Dorsolateral prefrontal cortex (tissue), 120 donors: ENCODE measurements at regions of chr12 and their contacts with region 1.

Region 1: GRCh38 chr12:38332814-38333213 is 16.2 kb downstream of the ALG10B start:
- DNase-seq: no peak
- H3K4me3 ChIP-seq: no peak overlapping the region
- H3K27ac ChIP-seq: no peak overlapping the region
- H3K27me3 ChIP-seq: no peaks in the 10 kb centered on the region
- CTCF ChIP-seq: no peak

Region 2: DNA sequence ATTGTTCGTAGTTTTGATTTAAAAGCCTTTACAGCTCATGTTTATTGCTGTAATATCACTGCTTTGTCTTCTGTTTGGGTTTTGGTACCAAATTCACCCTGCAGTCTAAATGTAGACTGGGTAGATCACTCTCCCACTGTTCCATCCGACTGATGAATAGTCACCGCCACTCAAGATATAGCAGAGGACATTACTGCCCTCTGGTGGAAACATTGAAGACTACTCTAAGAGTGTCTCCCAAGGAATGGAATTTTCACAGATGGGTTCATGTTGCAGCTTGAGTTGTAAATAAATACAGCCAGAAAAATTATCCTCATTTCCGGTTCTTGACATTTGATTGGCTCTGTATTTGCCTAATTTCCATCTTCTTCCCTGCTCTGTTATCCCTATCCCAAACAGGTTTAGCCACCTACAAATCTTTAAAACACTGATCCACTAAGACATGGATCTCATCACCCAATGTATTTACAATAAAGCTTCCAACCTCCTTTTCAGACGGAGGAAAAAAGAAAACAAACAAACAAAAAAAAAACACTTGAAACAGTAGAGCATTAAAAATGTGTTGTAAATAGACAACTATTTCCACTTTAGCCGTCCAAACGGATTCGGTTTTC is 770.8 kb after region 1 on chr12:
- intact Hi-C with region 1: loop called (anchors 10 kb)
- DNase-seq: no peak
- H3K4me3 ChIP-seq: peak overlapping the region in 37 of 59 donors; percentile 2 to 52 (median 20)
- H3K27ac ChIP-seq: no peak overlapping the region
- H3K27me3 ChIP-seq: no peaks in the 10 kb centered on the region
- CTCF ChIP-seq: peak; percentile 69 to 90 (median 82)